ENCODE measurements at regions of chr2 and their contacts with region 1.

Region 1: DNA sequence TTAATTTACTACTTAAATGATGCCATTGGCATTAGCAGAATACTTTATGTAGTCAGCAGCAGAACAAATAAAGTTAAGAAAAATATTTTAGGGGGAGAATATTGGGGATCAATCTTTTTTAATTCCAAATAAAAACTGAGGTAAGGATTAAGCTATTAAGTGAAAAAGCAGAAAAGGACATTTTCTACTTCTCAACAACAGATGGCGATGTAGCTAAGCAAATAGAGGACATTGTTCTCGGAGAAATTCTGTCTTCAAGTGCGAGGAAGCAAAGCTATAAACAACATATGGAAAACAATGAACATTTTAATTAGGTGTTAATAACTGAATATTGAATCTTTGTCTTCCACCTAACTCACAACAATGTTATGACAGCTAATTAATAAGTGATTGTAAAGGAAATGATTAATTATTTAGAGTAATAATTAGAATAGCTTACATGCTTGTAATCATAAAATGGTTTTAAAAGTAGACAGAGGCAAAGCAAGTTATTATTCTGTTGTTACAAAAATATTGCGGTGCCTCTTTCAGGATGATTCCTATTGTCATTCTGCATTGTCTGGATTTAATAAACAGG is 32.9 kb upstream of the CCDC93 start:
- DNase-seq: no peak
- ATAC-seq: no peak
- H3K4me3 Mint-ChIP-seq: no peak overlapping the region
- H3K27ac Mint-ChIP-seq: no peak overlapping the region
- H3K4me1 Mint-ChIP-seq: peaks cover 3% of the 10 kb centered on the region
- H3K27me3 Mint-ChIP-seq: peaks cover 44% of the 10 kb centered on the region

Region 2: GRCh38 chr2:118032169-118033013 is 14.3 kb before region 1 on chr2:
- CTCF ChIA-PET with region 1: interaction called, 19 read pairs
- POLR2A ChIA-PET with region 1: no interaction called
- DNase-seq: peak; percentile 64
- ATAC-seq: peak; percentile 68
- H3K4me3 Mint-ChIP-seq: no peak overlapping the region
- H3K27ac Mint-ChIP-seq: no peak overlapping the region
- H3K4me1 Mint-ChIP-seq: no peaks in the 10 kb centered on the region
- H3K27me3 Mint-ChIP-seq: peaks cover 25% of the 10 kb centered on the region

Region 3: GRCh38 chr2:118088051-118089024 is 41.6 kb after region 1 on chr2 and contains the start of gene INSIG2:
- CTCF ChIA-PET with region 1: interaction called, 14 read pairs
- POLR2A ChIA-PET with region 1: no interaction called
- DNase-seq: peak; percentile 96
- ATAC-seq: peak; percentile 95
- H3K4me3 Mint-ChIP-seq: peak within 1 kb of the TSS; percentile 92
- H3K27ac Mint-ChIP-seq: peak within 1 kb of the TSS; percentile 89
- H3K4me1 Mint-ChIP-seq: peaks cover 25% of the 10 kb centered on the region
- H3K27me3 Mint-ChIP-seq: peaks cover 11% of the 10 kb centered on the region
- total RNA-seq, gene INSIG2: 30.1 to 32.6 TPM

Region 4: DNA sequence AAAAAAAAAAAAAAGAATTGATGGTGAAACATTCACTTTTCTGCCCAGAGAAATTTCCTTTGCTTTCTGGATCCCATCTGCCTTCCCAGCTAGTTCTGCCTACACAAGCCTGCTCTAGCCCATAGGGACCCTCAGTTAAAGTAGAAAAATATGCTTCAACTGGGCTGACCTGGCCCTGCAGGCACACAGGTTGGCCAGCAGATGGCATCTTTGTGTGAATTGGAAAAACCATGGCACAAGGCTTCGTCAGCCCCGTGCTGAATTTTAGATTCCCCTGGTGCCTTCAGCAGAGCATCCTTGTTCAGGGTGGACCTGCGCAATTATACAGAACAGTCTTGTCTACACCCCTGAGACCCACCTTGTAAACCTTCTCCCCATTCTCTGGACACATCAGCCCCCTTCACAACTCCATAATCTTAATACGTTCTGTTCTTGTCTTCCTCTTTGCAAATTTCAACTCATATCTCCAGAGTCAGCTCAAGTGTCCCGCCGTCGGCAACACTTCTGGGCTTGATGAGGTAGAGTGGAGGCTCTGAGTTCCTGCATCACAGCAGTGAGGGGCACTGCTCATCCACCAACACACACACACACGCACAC is 156.1 kb after region 1 on chr2:
- CTCF ChIA-PET with region 1: interaction called, 12 read pairs
- POLR2A ChIA-PET with region 1: no interaction called
- DNase-seq: peak; percentile 63
- ATAC-seq: peak; percentile 88
- H3K4me3 Mint-ChIP-seq: no peak overlapping the region
- H3K27ac Mint-ChIP-seq: no peak overlapping the region
- H3K4me1 Mint-ChIP-seq: peaks cover 6% of the 10 kb centered on the region
- H3K27me3 Mint-ChIP-seq: peaks cover 23% of the 10 kb centered on the region

Region 5: GRCh38 chr2:118855451-118856279 is 808.9 kb after region 1 on chr2:
- CTCF ChIA-PET with region 1: interaction called, 13 read pairs
- POLR2A ChIA-PET with region 1: no interaction called
- DNase-seq: peak; percentile 82
- ATAC-seq: peak; percentile 90
- H3K4me3 Mint-ChIP-seq: peak overlapping the region; percentile 42
- H3K27ac Mint-ChIP-seq: peak overlapping the region; percentile 11
- H3K4me1 Mint-ChIP-seq: peaks cover 11% of the 10 kb centered on the region
- H3K27me3 Mint-ChIP-seq: peaks cover 79% of the 10 kb centered on the region